Caco-2 (cell line): ENCODE measurements at regions of chr4 and their contacts with region 1.

Region 1: DNA sequence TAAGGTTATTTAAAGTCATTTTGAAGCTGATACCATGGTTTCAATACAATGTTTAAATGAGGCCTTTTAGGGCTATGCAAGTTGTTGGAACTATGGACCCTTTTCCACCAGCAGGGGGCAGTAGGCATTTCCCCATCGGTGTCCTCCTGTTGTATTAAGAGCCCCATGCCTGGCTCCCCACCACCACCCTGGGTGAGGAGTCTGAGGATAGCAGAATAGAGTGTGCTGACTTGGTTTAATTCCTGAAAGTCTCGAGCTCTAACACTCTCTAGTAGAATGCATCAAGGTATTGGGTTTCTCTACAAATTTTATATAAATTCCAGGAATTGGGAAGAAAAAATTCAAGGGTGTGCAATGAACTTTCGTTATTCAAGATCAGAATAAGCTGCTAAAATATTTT is 234.8 kb upstream of the JADE1 start:
- DNase-seq: peak; percentile 71 to 84
- H3K4me3 ChIP-seq: no peak overlapping the region
- H3K4me3 Mint-ChIP-seq: no peak overlapping the region
- H3K27ac Mint-ChIP-seq: peak overlapping the region; percentile 81
- H3K4me1 ChIP-seq: peaks cover 41% of the 10 kb centered on the region
- H3K4me1 Mint-ChIP-seq: peaks cover 34% of the 10 kb centered on the region
- H3K27me3 ChIP-seq: no peaks in the 10 kb centered on the region
- H3K27me3 Mint-ChIP-seq: no peaks in the 10 kb centered on the region
- CTCF ChIP-seq: peak; percentile 41 to 77

Region 2: DNA sequence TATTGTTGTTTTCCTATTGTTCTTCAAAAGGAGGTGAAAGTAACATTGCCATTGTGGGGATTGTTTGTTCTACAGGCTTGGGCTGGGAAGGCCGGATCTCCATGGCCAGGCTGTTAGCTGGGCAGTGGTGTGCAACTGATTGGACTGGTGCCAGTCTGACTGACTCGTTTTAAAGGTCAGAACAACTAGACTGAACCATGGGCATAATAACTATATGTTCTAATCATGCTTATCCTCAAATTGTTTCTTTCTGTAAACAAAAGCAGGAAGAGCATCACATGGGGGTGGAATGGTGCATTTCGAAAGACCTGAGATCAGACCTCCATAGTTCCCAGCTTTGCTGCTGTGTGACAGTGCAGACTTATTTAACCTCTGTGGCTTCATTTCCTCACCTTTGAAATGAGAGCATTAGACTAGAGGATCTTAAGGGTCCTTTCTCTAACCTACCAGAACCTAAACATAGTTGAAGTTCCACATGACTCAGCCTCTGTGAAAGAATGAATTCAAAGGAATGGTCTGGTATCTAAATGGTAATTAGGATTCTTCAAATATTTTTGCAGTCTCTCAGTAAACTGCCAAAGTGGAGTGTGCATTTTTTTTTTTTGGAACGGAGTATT is 220.4 kb before region 1 on chr4:
- CTCF ChIA-PET with region 1: no interaction called
- POLR2A ChIA-PET with region 1: no interaction called
- intact Hi-C with region 1: loop called (anchors 5 kb)
- DNase-seq: peak in 1 of 2 experiments; percentile 48
- H3K4me3 ChIP-seq: no peak overlapping the region
- H3K4me3 Mint-ChIP-seq: peak overlapping the region; percentile 34
- H3K27ac Mint-ChIP-seq: peak overlapping the region; percentile 69
- H3K4me1 ChIP-seq: peaks cover 72% of the 10 kb centered on the region
- H3K4me1 Mint-ChIP-seq: peaks cover 30% of the 10 kb centered on the region
- H3K27me3 ChIP-seq: no peaks in the 10 kb centered on the region
- H3K27me3 Mint-ChIP-seq: no peaks in the 10 kb centered on the region
- CTCF ChIP-seq: no peak

Region 3: DNA sequence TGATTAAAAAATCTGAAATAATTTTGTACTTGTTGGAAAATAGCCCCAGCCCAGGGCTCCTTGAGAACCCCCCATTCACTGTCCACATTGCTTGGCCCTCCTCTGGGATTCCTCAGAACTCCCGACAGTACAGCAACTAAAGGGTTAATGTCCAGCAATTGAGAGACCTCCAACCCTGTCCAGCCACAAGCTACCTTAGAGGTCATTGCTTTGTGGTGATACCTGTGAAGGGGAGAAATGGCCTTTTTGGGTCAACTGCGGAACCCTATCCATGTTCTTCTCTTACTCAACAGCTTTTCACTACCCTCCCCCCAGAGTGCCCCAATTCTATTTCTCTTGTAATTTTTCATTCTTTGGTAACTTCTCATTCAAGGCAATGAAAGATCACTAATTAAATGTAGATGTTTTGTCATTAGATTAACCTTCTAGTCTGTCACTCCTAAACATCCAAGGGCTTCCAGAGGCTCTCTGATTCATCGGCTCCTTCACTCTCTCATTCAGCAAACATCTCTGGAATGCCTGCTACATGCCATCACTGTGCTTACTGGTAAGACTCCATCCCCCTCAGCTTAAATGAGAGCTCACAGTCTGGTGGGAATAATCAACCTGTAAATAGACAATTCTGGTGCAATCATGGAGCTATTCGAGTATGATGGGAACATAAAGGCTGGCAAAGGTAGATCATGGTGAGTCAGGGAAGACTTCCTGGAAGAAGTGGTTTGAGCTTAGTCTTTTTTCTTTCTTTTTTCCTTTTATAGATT is 45.7 kb before region 1 on chr4:
- CTCF ChIA-PET with region 1: interaction called, 3 read pairs
- POLR2A ChIA-PET with region 1: no interaction called
- intact Hi-C with region 1: loop called (anchors 1 kb)
- DNase-seq: peak; percentile 69 to 80
- H3K4me3 ChIP-seq: no peak overlapping the region
- H3K4me3 Mint-ChIP-seq: peak overlapping the region; percentile 46
- H3K27ac Mint-ChIP-seq: peak overlapping the region; percentile 95
- H3K4me1 ChIP-seq: peaks cover 49% of the 10 kb centered on the region
- H3K4me1 Mint-ChIP-seq: peaks cover 37% of the 10 kb centered on the region
- H3K27me3 ChIP-seq: no peaks in the 10 kb centered on the region
- H3K27me3 Mint-ChIP-seq: no peaks in the 10 kb centered on the region
- CTCF ChIP-seq: no peak

Region 4: GRCh38 chr4:128542041-128542440 is 32.7 kb before region 1 on chr4:
- CTCF ChIA-PET with region 1: no interaction called
- POLR2A ChIA-PET with region 1: no interaction called
- intact Hi-C with region 1: no loop called
- DNase-seq: no peak
- H3K4me3 ChIP-seq: no peak overlapping the region
- H3K4me3 Mint-ChIP-seq: no peak overlapping the region
- H3K27ac Mint-ChIP-seq: no peak overlapping the region
- H3K4me1 ChIP-seq: no peaks in the 10 kb centered on the region
- H3K4me1 Mint-ChIP-seq: peaks cover 7% of the 10 kb centered on the region
- H3K27me3 ChIP-seq: no peaks in the 10 kb centered on the region
- H3K27me3 Mint-ChIP-seq: no peaks in the 10 kb centered on the region
- CTCF ChIP-seq: no peak

Region 5: DNA sequence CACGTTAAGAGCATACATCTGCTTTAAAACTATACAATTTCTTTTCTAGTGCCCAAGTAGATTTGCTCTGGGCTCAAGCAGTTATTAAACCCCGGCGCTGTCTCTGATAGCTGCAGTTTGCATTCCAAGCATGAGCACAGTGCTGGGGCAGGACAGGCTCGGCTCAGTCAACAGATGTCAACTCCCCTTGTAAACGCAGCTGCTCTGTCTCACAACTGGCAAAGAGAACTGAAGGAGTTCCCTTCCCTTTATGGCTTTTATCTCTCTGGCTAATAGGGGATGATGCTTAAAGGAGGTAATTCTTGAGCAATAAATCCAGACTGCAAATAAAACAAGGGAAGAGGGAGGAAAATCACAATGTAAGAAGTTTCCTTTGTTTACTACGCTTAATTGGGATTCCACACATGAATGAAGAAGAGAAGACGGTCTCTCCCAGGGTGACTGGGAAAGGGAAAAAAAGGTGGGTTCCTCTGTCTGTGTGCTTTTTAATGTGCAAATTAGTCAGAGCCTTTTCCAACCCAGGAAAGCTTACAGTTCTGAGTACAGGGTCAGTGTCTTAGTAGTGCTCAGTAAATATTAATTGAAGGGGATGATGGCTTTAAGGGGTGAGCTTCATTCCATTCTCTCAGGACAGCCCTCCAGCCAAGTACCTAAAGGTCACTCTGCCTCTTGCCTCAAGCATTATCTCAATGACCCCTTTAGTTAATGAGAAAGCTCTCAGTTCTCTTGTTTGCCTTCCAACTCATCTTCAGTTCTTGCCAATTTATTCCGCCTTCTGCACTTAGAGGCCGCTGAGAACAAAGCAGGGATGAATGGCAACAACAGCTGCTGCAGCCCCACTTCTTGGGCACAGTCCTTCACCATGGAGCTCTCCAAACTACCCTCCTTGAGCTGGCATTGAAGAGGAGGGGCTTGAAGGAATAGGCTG is 79.1 kb after region 1 on chr4:
- CTCF ChIA-PET with region 1: no interaction called
- POLR2A ChIA-PET with region 1: no interaction called
- intact Hi-C with region 1: loop called (anchors 1 kb)
- DNase-seq: peak; percentile 79 to 93
- H3K4me3 ChIP-seq: no peak overlapping the region
- H3K4me3 Mint-ChIP-seq: peak overlapping the region; percentile 54
- H3K27ac Mint-ChIP-seq: peak overlapping the region; percentile 73
- H3K4me1 ChIP-seq: peaks cover 54% of the 10 kb centered on the region
- H3K4me1 Mint-ChIP-seq: peaks cover 26% of the 10 kb centered on the region
- H3K27me3 ChIP-seq: no peaks in the 10 kb centered on the region
- H3K27me3 Mint-ChIP-seq: no peaks in the 10 kb centered on the region
- CTCF ChIP-seq: no peak

Region 6: DNA sequence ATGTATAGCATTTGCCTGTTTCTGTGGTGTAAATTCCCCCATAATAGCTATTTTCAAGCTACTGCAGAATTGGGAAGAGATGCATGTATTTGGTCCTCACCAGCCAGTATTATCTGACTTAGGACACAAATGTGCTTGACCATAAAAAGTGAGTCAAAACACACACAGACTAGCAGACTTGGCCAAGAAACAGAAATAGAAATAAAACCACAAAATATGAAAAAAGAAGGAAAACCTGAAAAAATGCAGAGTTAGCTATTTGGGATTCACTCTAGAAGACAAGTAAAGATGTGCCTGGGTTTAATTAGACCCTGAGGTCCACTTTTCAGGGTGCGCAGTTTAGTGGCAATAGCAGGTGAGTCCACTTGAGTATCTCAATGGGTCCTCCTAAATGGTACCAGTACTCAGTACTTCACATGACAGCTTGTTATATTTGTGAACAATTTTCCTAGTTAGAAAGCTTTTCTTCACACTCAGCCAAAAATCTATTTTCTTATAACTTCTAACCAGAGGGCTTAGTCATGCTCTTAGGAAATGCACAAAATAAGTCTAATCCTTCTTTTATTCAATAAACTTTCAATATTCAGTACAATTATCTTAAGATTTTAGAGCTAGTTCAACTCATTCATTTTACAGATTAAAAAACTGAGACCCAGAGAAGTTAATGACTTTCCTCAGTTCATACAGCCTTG is 126.1 kb after region 1 on chr4:
- CTCF ChIA-PET with region 1: no interaction called
- POLR2A ChIA-PET with region 1: no interaction called
- intact Hi-C with region 1: no loop called
- DNase-seq: no peak
- H3K4me3 ChIP-seq: no peak overlapping the region
- H3K4me3 Mint-ChIP-seq: no peak overlapping the region
- H3K27ac Mint-ChIP-seq: no peak overlapping the region
- H3K4me1 ChIP-seq: no peaks in the 10 kb centered on the region
- H3K4me1 Mint-ChIP-seq: peaks cover 7% of the 10 kb centered on the region
- H3K27me3 ChIP-seq: no peaks in the 10 kb centered on the region
- H3K27me3 Mint-ChIP-seq: no peaks in the 10 kb centered on the region
- CTCF ChIP-seq: no peak

Region 7: GRCh38 chr4:128809477-128810330 is 235.0 kb after region 1 on chr4 and contains the start of gene JADE1:
- CTCF ChIA-PET with region 1: interaction called, 3 read pairs
- POLR2A ChIA-PET with region 1: interaction called, 10 read pairs
- intact Hi-C with region 1: loop called (anchors 1 kb)
- DNase-seq: peak; percentile 93 to 95
- H3K4me3 ChIP-seq: peak within 1 kb of the TSS; percentile 67
- H3K4me3 Mint-ChIP-seq: peak within 1 kb of the TSS; percentile 93
- H3K27ac Mint-ChIP-seq: peak within 1 kb of the TSS; percentile 97
- H3K4me1 ChIP-seq: peaks cover 26% of the 10 kb centered on the region
- H3K4me1 Mint-ChIP-seq: peaks cover 8% of the 10 kb centered on the region
- H3K27me3 ChIP-seq: no peaks in the 10 kb centered on the region
- H3K27me3 Mint-ChIP-seq: no peaks in the 10 kb centered on the region
- CTCF ChIP-seq: peak; percentile 57 to 78
- total RNA-seq, gene JADE1: 30.2 and 32.5 TPM in 2 replicates